ENCODE measurements at regions of chr16 and their contacts with region 1.

Region 1: DNA sequence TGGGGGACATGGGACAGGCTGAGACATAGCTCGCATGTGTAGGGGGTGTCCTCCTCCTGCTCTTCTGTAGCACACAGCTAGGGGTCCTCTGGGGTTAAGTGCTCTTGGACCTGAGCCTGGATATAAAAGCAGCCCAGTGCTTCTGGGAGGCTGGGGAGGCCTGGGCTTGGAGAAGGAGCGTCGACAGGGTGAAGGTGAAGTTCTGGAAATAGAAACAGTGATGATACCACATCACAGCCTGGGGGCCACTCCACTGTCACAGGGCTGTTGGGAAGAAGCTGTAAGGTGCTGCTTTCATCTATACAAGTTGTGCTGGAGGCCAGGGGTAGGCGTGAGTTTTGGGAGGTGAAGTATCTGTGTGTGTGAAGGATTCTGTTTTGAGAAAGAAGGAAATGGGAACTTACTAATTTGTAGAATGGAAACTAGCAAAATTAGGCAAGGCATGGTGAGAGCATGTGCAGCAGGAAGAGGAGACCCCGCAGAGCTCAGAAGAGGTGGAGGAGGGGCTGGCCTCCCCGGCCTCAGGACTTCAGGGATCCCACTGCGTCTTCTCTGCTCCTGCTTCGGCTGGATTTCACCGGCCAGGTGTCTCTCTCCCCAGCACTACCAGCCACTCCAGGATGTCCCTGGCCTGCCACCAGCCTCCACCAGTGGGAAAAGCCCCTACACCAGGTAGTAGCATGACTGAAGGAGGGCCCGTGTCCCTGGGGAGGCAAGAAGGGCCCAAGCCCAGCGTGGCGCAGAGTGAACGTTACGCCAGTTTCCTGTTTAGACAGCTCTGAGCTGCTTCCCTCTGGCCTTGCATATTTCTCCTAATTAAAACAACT is 19.4 kb downstream of the PLCG2 start:
- DNase-seq: no peak
- ATAC-seq: no peak
- H3K4me3 ChIP-seq: no peak overlapping the region
- H3K27ac ChIP-seq: no peak overlapping the region
- H3K4me1 ChIP-seq: no peaks in the 10 kb centered on the region
- H3K27me3 ChIP-seq: no peaks in the 10 kb centered on the region
- CTCF ChIP-seq: no peak
- POLR2A ChIP-seq: no peak

Region 2: DNA sequence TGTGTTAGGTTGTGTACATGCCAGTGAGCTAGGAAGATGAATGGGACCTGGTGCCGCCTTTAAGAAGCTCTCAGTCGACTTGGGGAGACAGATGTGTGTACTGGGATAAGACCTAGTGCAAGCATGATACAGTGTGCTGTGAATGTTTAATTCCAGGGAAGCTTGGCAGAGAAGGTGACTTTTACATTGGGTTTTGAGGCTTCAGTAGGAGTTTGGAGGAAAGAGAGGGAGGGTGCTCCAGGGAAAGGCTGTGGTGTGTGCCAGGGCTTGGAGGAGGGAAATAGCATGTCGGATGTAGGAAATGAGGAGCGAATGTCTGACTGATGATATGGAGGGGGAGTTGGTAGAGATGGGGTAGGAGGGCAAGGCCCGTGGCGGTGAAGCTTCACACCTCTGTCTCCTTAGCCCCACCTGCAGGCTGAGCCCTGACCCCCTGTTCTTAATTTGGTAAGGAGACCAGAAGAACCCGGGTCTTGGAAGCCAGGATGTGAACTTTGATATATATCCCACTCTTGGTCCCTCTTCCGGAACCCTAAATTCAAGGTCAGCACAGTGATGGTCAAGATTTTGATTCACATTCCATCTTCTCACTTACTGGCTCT is 57.1 kb after region 1 on chr16:
- in situ Hi-C with region 1: loop called in 1 of 4 experiments (anchors 10 kb)
- intact Hi-C with region 1: no loop called
- DNase-seq: no peak
- ATAC-seq: no peak
- H3K4me3 ChIP-seq: no peak overlapping the region
- H3K27ac ChIP-seq: no peak overlapping the region
- H3K4me1 ChIP-seq: no peaks in the 10 kb centered on the region
- H3K27me3 ChIP-seq: no peaks in the 10 kb centered on the region
- CTCF ChIP-seq: no peak
- POLR2A ChIP-seq: no peak